Activated B cell treated with CpG ODN at 0.5 μM for 24 hours (primary cell): ENCODE measurements at regions of chr15 and their contacts with region 1.

Region 1: DNA sequence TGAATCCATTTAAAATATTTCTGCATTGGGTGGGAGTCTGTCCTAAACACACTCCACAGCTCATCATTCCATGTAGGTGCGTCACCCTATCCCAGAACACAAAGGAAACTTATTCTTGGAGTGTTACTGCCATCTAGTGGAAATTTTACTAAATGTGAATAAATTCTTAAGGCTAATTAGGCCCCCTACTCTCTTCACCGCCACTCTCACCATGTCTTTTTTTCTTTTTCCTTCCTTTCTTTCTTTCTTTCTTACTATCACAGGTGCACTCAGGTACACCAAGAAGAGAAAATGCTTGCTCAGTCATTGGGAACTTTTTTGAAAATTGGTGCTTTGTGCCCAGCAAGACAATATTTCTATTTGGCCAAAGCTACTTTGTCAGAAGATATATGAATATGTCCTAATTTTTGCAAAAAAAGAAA is 26.4 kb upstream of the ATP8B4 start:
- DNase-seq: no peak
- ATAC-seq: no peak
- H3K4me3 Mint-ChIP-seq: no peak overlapping the region
- H3K27ac Mint-ChIP-seq: no peak overlapping the region
- H3K4me1 Mint-ChIP-seq: peaks cover 9% of the 10 kb centered on the region
- H3K27me3 Mint-ChIP-seq: no peaks in the 10 kb centered on the region
- CTCF ChIP-seq: no peak

Region 2: DNA sequence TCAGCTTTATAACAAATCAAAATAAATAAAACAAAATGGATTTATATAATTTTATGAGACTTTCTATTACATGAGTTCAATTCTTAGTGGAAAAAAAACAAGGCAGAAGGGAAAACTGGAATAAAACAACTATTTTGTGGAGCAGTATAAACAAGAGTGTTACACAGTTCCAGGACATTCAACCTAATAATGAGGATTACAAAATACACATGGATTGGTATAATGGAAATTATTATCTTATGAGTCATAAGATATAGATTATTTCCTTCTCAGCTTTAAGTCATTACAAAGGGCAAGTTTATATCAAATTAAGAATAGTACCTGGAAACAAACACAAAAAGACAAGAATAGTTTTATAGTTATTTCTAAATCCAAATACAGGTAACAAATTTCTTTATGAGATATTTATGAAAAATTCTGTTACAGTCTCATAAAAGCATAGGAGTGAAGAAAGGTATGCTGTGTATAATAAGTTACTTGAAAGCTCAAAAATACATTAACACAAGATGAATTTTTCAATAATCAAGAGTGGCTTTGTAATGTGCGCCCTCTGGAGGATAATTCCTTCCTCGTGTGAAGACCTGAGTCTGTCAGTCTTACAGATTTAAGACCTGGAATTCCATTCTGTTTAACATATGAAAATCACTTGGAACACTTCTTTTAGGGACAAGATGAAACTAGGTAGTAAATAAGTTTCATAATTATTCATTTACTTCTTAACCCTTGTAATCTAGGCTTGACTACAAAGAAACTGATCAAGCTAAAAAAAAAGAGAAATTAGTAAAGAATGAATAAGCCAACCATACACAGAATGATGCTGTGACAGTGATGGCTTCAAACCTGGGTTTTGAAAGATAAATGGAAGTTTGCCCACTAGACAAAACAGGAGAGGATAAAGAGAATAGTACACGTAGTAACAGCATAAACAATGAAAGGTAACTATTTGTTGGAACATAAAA is 999.5 kb before region 1 on chr15:
- CTCF ChIA-PET with region 1: no interaction called
- POLR2A ChIA-PET with region 1: no interaction called
- intact Hi-C with region 1: loop called (anchors 2 kb)
- DNase-seq: no peak
- ATAC-seq: no peak
- H3K4me3 Mint-ChIP-seq: no peak overlapping the region
- H3K27ac Mint-ChIP-seq: peak overlapping the region; percentile 3
- H3K4me1 Mint-ChIP-seq: peaks cover 40% of the 10 kb centered on the region
- H3K27me3 Mint-ChIP-seq: no peaks in the 10 kb centered on the region
- CTCF ChIP-seq: no peak

Region 3: GRCh38 chr15:49421991-49422390 is 723.5 kb before region 1 on chr15:
- CTCF ChIA-PET with region 1: interaction called, 4 read pairs
- POLR2A ChIA-PET with region 1: no interaction called
- intact Hi-C with region 1: loop called (anchors 1 kb)
- DNase-seq: peak; percentile 18
- ATAC-seq: peak; percentile 42
- H3K4me3 Mint-ChIP-seq: no peak overlapping the region
- H3K27ac Mint-ChIP-seq: no peak overlapping the region
- H3K4me1 Mint-ChIP-seq: peaks cover 3% of the 10 kb centered on the region
- H3K27me3 Mint-ChIP-seq: peaks cover 3% of the 10 kb centered on the region
- CTCF ChIP-seq: no peak

Region 4: GRCh38 chr15:50134520-50135024 is 10.9 kb before region 1 on chr15:
- CTCF ChIA-PET with region 1: interaction called, 12 read pairs
- POLR2A ChIA-PET with region 1: no interaction called
- intact Hi-C with region 1: no loop called
- DNase-seq: no peak
- ATAC-seq: peak; percentile 66
- H3K4me3 Mint-ChIP-seq: no peak overlapping the region
- H3K27ac Mint-ChIP-seq: peak overlapping the region; percentile 71
- H3K4me1 Mint-ChIP-seq: peaks cover 25% of the 10 kb centered on the region
- H3K27me3 Mint-ChIP-seq: no peaks in the 10 kb centered on the region
- CTCF ChIP-seq: no peak